CD4-positive, alpha-beta memory T cell (primary cell): ENCODE measurements at regions of chr1 and their contacts with region 1.

Region 1: GRCh38 chr1:248873409-248873992 is 14.6 kb upstream of the ZNF692 start:
- DNase-seq: peak; percentile 88 to 95 (median 92)
- H3K4me3 ChIP-seq: peak overlapping the region; percentile 79 to 91
- H3K4me3 Mint-ChIP-seq: peak overlapping the region; percentile 95 to 98 (median 97)
- H3K27ac ChIP-seq: peak overlapping the region; percentile 67
- H3K27ac Mint-ChIP-seq: peak overlapping the region; percentile 98 to 100 (median 99)
- H3K4me1 ChIP-seq: peaks cover 7% of the 10 kb centered on the region
- H3K4me1 Mint-ChIP-seq: peaks cover 11 to 32% (median 17%) of the 10 kb centered on the region in 4 donors
- H3K27me3 ChIP-seq: no peaks in the 10 kb centered on the region
- H3K27me3 Mint-ChIP-seq: peaks cover 8 to 12% of the 10 kb centered on the region in 2 donors

Region 2: GRCh38 chr1:248837794-248838356 is 35.6 kb before region 1 on chr1 and contains the start of gene ZNF672:
- CTCF ChIA-PET with region 1: interaction called, 4 read pairs
- POLR2A ChIA-PET with region 1: interaction called, 37 read pairs
- intact Hi-C with region 1: loop called (anchors 1 kb)
- DNase-seq: peak; percentile 92 to 95 (median 93)
- H3K4me3 ChIP-seq: peak within 1 kb of the TSS; percentile 64 to 87
- H3K4me3 Mint-ChIP-seq: peak within 1 kb of the TSS in 2 of 8 donors; percentile 95 to 99
- H3K27ac ChIP-seq: peak within 1 kb of the TSS; percentile 97
- H3K27ac Mint-ChIP-seq: peak within 1 kb of the TSS in 6 of 7 donors; percentile 96 to 99 (median 99)
- H3K4me1 ChIP-seq: peaks cover 36% of the 10 kb centered on the region
- H3K4me1 Mint-ChIP-seq: peaks cover 13 to 36% (median 24%) of the 10 kb centered on the region in 4 donors
- H3K27me3 ChIP-seq: no peaks in the 10 kb centered on the region
- H3K27me3 Mint-ChIP-seq: peaks cover 3 to 4% of the 10 kb centered on the region in 2 donors
- total RNA-seq, gene ZNF672: 39.7 to 42.8 TPM

Region 3: GRCh38 chr1:248858891-248859889 is 14.3 kb before region 1 on chr1 and contains the start of gene ZNF692:
- CTCF ChIA-PET with region 1: interaction called, 12 read pairs
- POLR2A ChIA-PET with region 1: interaction called, 84 read pairs
- intact Hi-C with region 1: loop called (anchors 1 kb)
- DNase-seq: peak; percentile 97 to 98 (median 97)
- H3K4me3 ChIP-seq: peak within 1 kb of the TSS; percentile 66 to 81
- H3K4me3 Mint-ChIP-seq: peak within 1 kb of the TSS; percentile 84 to 93 (median 89)
- H3K27ac ChIP-seq: peak within 1 kb of the TSS; percentile 58
- H3K27ac Mint-ChIP-seq: peak within 1 kb of the TSS; percentile 88 to 98 (median 97)
- H3K4me1 ChIP-seq: peaks cover 58% of the 10 kb centered on the region
- H3K4me1 Mint-ChIP-seq: peaks cover 38 to 63% (median 45%) of the 10 kb centered on the region in 4 donors
- H3K27me3 ChIP-seq: no peaks in the 10 kb centered on the region
- H3K27me3 Mint-ChIP-seq: no peaks in the 10 kb centered on the region
- total RNA-seq, gene ZNF692: 70.8 to 74.8 TPM

Region 4: DNA sequence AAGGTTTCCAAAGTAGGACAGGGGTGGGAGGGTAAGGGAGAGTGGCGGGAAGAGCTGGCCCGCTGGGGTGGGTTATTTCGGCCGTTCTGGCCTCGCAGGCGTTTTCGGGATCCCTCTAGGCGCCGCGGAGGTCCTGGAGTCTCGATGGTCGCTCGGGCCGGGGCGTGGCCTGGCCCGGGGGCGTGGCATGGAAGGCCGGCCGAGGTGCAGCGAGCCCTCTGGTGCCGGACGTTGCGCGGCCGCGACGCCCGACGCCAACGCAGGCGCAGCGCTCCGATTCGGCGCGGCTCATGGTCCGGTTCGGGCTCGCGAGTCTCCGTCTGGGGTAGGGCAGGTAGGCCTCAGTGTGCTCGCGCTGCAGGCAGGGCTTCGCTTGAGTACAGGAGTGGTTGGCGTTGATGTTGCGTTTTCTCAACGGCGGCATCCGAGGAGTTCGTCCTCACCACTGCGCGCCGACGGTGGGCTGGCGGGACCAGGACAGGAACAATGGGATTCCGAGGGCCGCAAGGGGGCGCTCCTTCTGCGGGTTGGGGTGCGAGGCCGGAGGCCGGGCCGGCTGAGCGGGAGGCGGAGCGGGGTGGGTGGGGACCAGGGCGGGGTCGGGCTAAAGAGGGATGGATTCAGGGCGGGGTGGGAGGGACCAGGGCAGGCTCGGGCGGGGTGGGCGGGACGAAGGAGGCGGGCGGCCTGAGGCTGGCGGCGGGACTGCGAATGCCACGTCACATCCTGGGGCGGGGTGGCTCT is 32.7 kb after region 1 on chr1 and contains the start of gene PGBD2:
- CTCF ChIA-PET with region 1: no interaction called
- POLR2A ChIA-PET with region 1: interaction called, 10 read pairs
- intact Hi-C with region 1: loop called (anchors 1 kb)
- DNase-seq: peak; percentile 90 to 93 (median 92)
- H3K4me3 ChIP-seq: peak within 1 kb of the TSS; percentile 45 to 80
- H3K4me3 Mint-ChIP-seq: peak within 1 kb of the TSS; percentile 96 to 98 (median 98)
- H3K27ac ChIP-seq: peak within 1 kb of the TSS; percentile 77
- H3K27ac Mint-ChIP-seq: peak within 1 kb of the TSS; percentile 92 to 99 (median 99)
- H3K4me1 ChIP-seq: peaks cover 28% of the 10 kb centered on the region
- H3K4me1 Mint-ChIP-seq: peaks cover 26 to 59% (median 35%) of the 10 kb centered on the region in 4 donors
- H3K27me3 ChIP-seq: no peaks in the 10 kb centered on the region
- H3K27me3 Mint-ChIP-seq: peaks cover 0 to 2% of the 10 kb centered on the region in 2 donors
- total RNA-seq, gene PGBD2: 18.3 to 19.6 TPM